Activated B cell treated with CpG ODN at 0.5 μM for 24 hours (primary cell): ENCODE measurements at regions of chr12 and their contacts with region 1.

Region 1: GRCh38 chr12:102169922-102170621 is 27.6 kb downstream of the PMCH start:
- DNase-seq: no peak
- ATAC-seq: peak; percentile 54
- H3K4me3 Mint-ChIP-seq: no peak overlapping the region
- H3K27ac Mint-ChIP-seq: no peak overlapping the region
- H3K4me1 Mint-ChIP-seq: no peaks in the 10 kb centered on the region
- H3K27me3 Mint-ChIP-seq: no peaks in the 10 kb centered on the region
- CTCF ChIP-seq: no peak

Region 2: GRCh38 chr12:102388469-102388868 is 218.4 kb after region 1 on chr12:
- CTCF ChIA-PET with region 1: no interaction called
- POLR2A ChIA-PET with region 1: no interaction called
- intact Hi-C with region 1: no loop called
- DNase-seq: no peak
- ATAC-seq: no peak
- H3K4me3 Mint-ChIP-seq: no peak overlapping the region
- H3K27ac Mint-ChIP-seq: no peak overlapping the region
- H3K4me1 Mint-ChIP-seq: no peaks in the 10 kb centered on the region
- H3K27me3 Mint-ChIP-seq: peaks cover 9% of the 10 kb centered on the region
- CTCF ChIP-seq: no peak

Region 3: GRCh38 chr12:102543494-102544485 is 373.7 kb after region 1 on chr12:
- CTCF ChIA-PET with region 1: interaction called, 3 read pairs
- POLR2A ChIA-PET with region 1: no interaction called
- intact Hi-C with region 1: loop called (anchors 1 kb)
- DNase-seq: no peak
- ATAC-seq: no peak
- H3K4me3 Mint-ChIP-seq: no peak overlapping the region
- H3K27ac Mint-ChIP-seq: no peak overlapping the region
- H3K4me1 Mint-ChIP-seq: no peaks in the 10 kb centered on the region
- H3K27me3 Mint-ChIP-seq: peaks cover 7% of the 10 kb centered on the region
- CTCF ChIP-seq: no peak

Region 4: GRCh38 chr12:102769319-102769916 is 599.3 kb after region 1 on chr12:
- CTCF ChIA-PET with region 1: interaction called, 3 read pairs
- POLR2A ChIA-PET with region 1: no interaction called
- intact Hi-C with region 1: loop called (anchors 1 kb)
- DNase-seq: no peak
- ATAC-seq: peak; percentile 71
- H3K4me3 Mint-ChIP-seq: no peak overlapping the region
- H3K27ac Mint-ChIP-seq: no peak overlapping the region
- H3K4me1 Mint-ChIP-seq: peaks cover 2% of the 10 kb centered on the region
- H3K27me3 Mint-ChIP-seq: peaks cover 10% of the 10 kb centered on the region
- CTCF ChIP-seq: no peak